ENCODE measurements at regions of chr12 and their contacts with region 1.

Region 1: GRCh38 chr12:124767066-124767821 is 96.4 kb downstream of the SCARB1 start:
- DNase-seq: peak; percentile 91
- ATAC-seq: peak; percentile 76
- H3K4me3 Mint-ChIP-seq: no peak overlapping the region
- H3K27ac Mint-ChIP-seq: no peak overlapping the region
- H3K4me1 Mint-ChIP-seq: peaks cover 20% of the 10 kb centered on the region
- H3K27me3 Mint-ChIP-seq: peaks cover 6% of the 10 kb centered on the region

Region 2: GRCh38 chr12:124036674-124037109 is 730.6 kb before region 1 on chr12:
- CTCF ChIA-PET with region 1: interaction called, 14 read pairs
- POLR2A ChIA-PET with region 1: no interaction called
- intact Hi-C with region 1: loop called (anchors 1 kb)
- DNase-seq: peak; percentile 65
- ATAC-seq: no peak
- H3K4me3 Mint-ChIP-seq: no peak overlapping the region
- H3K27ac Mint-ChIP-seq: no peak overlapping the region
- H3K4me1 Mint-ChIP-seq: no peaks in the 10 kb centered on the region
- H3K27me3 Mint-ChIP-seq: peaks cover 4% of the 10 kb centered on the region

Region 3: GRCh38 chr12:124227951-124228711 is 539.1 kb before region 1 on chr12:
- CTCF ChIA-PET with region 1: no interaction called
- POLR2A ChIA-PET with region 1: no interaction called
- intact Hi-C with region 1: loop called in 1 of 2 experiments (anchors 10 kb)
- DNase-seq: peak; percentile 17
- ATAC-seq: no peak
- H3K4me3 Mint-ChIP-seq: no peak overlapping the region
- H3K27ac Mint-ChIP-seq: no peak overlapping the region
- H3K4me1 Mint-ChIP-seq: peaks cover 12% of the 10 kb centered on the region
- H3K27me3 Mint-ChIP-seq: peaks cover 2% of the 10 kb centered on the region

Region 4: GRCh38 chr12:124347716-124348357 is 419.4 kb before region 1 on chr12:
- CTCF ChIA-PET with region 1: interaction called, 6 read pairs
- POLR2A ChIA-PET with region 1: no interaction called
- intact Hi-C with region 1: loop called (anchors 1 to 5 kb)
- DNase-seq: peak; percentile 49
- ATAC-seq: no peak
- H3K4me3 Mint-ChIP-seq: no peak overlapping the region
- H3K27ac Mint-ChIP-seq: no peak overlapping the region
- H3K4me1 Mint-ChIP-seq: no peaks in the 10 kb centered on the region
- H3K27me3 Mint-ChIP-seq: no peaks in the 10 kb centered on the region

Region 5: GRCh38 chr12:124545508-124546418 is 221.5 kb before region 1 on chr12:
- CTCF ChIA-PET with region 1: interaction called, 5 read pairs
- POLR2A ChIA-PET with region 1: no interaction called
- intact Hi-C with region 1: loop called in 1 of 2 experiments (anchors 5 kb)
- DNase-seq: peak; percentile 85
- ATAC-seq: peak; percentile 84
- H3K4me3 Mint-ChIP-seq: peak overlapping the region; percentile 31
- H3K27ac Mint-ChIP-seq: peak overlapping the region; percentile 37
- H3K4me1 Mint-ChIP-seq: peaks cover 70% of the 10 kb centered on the region
- H3K27me3 Mint-ChIP-seq: no peaks in the 10 kb centered on the region

Region 6: DNA sequence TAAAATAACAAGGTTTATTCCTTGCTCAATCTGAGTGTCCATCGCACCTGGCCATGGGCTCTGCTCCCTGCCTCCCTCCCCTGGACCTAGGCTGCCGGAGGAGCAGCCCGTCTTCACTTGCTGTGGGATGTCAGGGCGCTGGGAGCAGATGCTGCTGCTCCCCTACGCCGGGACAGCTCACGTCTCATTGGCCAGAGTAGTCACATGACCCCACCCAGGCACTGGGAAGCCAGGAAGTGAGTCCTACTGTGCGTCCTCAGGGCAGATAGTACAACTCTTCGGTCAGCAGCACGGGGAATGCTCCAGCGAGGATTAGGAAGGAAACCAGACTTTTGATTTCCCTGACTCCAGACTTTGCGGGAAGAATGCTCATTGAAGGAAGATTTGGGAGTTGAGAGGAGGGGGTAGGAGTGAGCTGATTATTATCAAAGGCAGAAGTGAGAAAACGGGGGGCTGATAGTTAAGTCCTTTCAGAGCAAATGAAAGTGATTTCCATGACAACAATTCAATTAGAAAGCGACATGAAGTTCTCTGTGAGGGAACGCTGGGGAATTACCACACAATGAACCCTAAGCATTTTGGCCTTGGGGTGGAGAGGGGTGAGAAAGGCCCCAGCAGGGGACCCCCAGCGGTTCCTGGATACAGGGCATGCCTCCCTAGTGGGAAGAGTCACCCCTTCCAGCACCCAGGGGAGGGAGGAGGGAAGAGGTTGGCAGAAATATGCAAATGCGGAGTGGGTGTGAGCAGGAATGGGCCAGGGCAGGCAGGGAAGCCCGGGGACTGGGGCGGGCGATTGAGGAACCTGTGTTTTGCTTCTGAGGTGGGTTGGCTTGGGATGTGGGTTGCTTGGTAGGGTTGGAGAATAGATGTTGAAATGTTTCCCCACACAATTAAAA is 513.5 kb after region 1 on chr12:
- CTCF ChIA-PET with region 1: no interaction called
- POLR2A ChIA-PET with region 1: no interaction called
- intact Hi-C with region 1: no loop called
- DNase-seq: no peak
- ATAC-seq: no peak
- H3K4me3 Mint-ChIP-seq: no peak overlapping the region
- H3K27ac Mint-ChIP-seq: no peak overlapping the region
- H3K4me1 Mint-ChIP-seq: no peaks in the 10 kb centered on the region
- H3K27me3 Mint-ChIP-seq: peaks cover 16% of the 10 kb centered on the region

Region 7: GRCh38 chr12:125895851-125896250 is 1128.6 kb after region 1 on chr12:
- CTCF ChIA-PET with region 1: no interaction called
- POLR2A ChIA-PET with region 1: no interaction called
- intact Hi-C with region 1: no loop called
- DNase-seq: no peak
- ATAC-seq: no peak
- H3K4me3 Mint-ChIP-seq: no peak overlapping the region
- H3K27ac Mint-ChIP-seq: no peak overlapping the region
- H3K4me1 Mint-ChIP-seq: no peaks in the 10 kb centered on the region
- H3K27me3 Mint-ChIP-seq: no peaks in the 10 kb centered on the region

Measured in activated CD4-positive, alpha-beta T cell treated with anti-CD3 and anti-CD28 coated beads for 36 hours (primary cell).